ENCODE measurements at regions of chr1 and their contacts with region 1.

Region 1: GRCh38 chr1:175154629-175155472 is 37.7 kb downstream of the KIAA0040 start:
- DNase-seq: peak; percentile 83
- ATAC-seq: peak; percentile 65
- H3K4me3 Mint-ChIP-seq: no peak overlapping the region
- H3K27ac Mint-ChIP-seq: no peak overlapping the region
- H3K4me1 Mint-ChIP-seq: peaks cover 12% of the 10 kb centered on the region
- H3K27me3 Mint-ChIP-seq: peaks cover 25% of the 10 kb centered on the region
- CTCF ChIP-seq: peak; percentile 88

Region 2: GRCh38 chr1:175015243-175015642 is 139.6 kb before region 1 on chr1:
- CTCF ChIA-PET with region 1: no interaction called
- POLR2A ChIA-PET with region 1: no interaction called
- intact Hi-C with region 1: no loop called
- DNase-seq: no peak
- ATAC-seq: no peak
- H3K4me3 Mint-ChIP-seq: no peak overlapping the region
- H3K27ac Mint-ChIP-seq: peak overlapping the region; percentile 51
- H3K4me1 Mint-ChIP-seq: peaks cover 10% of the 10 kb centered on the region
- H3K27me3 Mint-ChIP-seq: no peaks in the 10 kb centered on the region
- CTCF ChIP-seq: no peak

Region 3: GRCh38 chr1:175035865-175036264 is 119.0 kb before region 1 on chr1:
- CTCF ChIA-PET with region 1: interaction called, 11 read pairs
- POLR2A ChIA-PET with region 1: interaction called, 3 read pairs
- intact Hi-C with region 1: no loop called
- DNase-seq: no peak
- ATAC-seq: no peak
- H3K4me3 Mint-ChIP-seq: no peak overlapping the region
- H3K27ac Mint-ChIP-seq: no peak overlapping the region
- H3K4me1 Mint-ChIP-seq: no peaks in the 10 kb centered on the region
- H3K27me3 Mint-ChIP-seq: no peaks in the 10 kb centered on the region
- CTCF ChIP-seq: no peak

Region 4: DNA sequence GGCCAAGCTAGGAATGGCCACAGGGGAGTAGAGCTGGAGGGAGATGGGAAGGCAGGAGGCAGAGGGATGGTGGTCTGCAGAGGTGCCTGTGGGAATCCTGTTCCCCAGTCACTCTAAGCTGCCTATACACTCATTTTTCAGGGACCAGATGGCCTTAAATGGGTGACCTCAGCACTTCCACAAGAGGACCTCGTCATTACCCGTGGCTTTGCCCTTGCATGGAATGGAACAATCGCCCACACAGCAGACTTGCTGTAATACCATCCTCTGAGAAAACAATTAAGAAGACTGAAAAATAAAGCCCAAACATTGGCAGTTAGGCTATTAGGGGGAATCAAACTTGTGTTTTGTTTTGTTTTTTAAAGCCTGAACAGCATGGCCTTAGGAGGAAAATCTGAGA is 100.1 kb before region 1 on chr1:
- CTCF ChIA-PET with region 1: no interaction called
- POLR2A ChIA-PET with region 1: no interaction called
- intact Hi-C with region 1: no loop called
- DNase-seq: no peak
- ATAC-seq: no peak
- H3K4me3 Mint-ChIP-seq: no peak overlapping the region
- H3K27ac Mint-ChIP-seq: no peak overlapping the region
- H3K4me1 Mint-ChIP-seq: no peaks in the 10 kb centered on the region
- H3K27me3 Mint-ChIP-seq: peaks cover 23% of the 10 kb centered on the region
- CTCF ChIP-seq: no peak

Region 5: DNA sequence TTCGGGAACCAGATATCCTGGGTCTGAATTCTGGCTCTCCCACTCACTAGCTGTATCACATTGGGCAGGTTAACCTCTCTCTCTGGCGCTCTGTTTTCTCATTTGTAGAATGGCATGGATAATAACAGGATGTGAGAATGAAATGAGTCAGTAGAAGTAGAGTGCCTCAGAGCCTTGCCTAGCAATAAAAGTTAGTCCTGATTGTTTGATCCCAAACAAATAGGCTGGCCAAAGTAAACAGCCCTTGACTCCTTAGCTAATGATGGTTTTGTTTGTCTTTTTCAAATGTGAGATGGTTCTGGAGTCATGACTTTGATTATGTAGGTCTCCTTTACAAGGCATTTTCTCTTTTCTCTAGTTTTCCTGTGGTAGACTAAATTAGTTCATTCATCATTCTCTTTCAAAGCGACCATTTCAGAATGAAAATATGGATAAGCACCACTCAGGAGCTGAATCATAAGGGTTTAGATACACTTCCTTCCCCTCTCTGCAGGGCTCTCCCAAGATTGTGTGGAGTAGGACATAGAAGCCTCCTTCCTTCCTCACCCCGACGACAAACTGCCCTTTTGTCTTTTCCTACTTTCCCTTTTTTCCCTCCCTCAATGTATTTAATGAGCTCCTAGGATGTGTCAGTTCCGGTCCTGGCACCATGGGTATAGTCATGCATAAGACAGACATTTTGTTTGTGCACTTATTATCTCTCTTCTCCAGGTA is 14.6 kb after region 1 on chr1:
- CTCF ChIA-PET with region 1: interaction called, 34 read pairs
- POLR2A ChIA-PET with region 1: interaction called, 3 read pairs
- intact Hi-C with region 1: no loop called
- DNase-seq: no peak
- ATAC-seq: peak; percentile 55
- H3K4me3 Mint-ChIP-seq: no peak overlapping the region
- H3K27ac Mint-ChIP-seq: peak overlapping the region; percentile 24
- H3K4me1 Mint-ChIP-seq: peaks cover 42% of the 10 kb centered on the region
- H3K27me3 Mint-ChIP-seq: no peaks in the 10 kb centered on the region
- CTCF ChIP-seq: no peak

Region 6: DNA sequence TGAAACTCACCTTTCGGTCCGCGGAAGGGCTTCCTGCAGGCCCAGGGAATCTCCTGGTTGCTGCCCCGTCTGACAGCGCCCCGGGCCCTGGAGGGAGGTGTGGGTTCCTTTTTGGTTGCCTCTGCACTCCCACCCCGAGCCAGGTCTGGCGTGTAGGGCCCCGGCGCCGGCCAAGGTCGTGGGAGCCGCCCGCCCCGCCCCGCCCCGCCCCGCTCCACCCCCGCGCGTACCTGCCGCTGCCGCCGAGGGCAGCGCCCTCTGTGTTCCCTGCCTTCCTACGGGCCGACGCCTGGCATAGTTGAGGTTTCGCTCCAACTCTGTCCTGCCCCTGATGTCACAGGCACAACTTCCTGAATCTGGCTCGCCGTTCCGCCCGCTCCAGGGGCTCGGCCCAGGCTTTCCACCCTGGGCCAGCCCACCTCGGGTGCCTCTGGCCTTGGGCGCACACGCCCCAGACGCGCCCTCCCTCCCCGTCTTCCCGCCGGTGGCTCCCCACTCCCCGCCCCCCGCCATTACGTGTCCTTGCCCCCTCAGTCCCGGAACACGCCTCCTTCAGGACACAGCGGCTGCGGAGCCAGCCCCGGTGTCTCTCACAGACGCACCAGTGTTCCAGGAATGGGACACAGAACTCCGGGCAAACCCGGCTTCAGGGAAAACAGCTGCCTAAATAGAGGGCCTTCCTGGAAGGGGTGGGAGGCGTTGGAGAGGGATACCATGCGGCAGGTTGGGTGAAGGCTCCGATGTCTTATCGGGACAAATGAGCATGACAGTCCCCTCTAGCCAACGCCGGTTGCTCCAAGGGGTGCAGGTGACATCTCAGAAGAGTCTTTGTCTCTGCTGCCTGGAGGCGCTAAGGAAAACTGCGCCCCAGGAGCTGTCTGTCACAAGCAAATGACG is 38.0 kb after region 1 on chr1 and contains the start of gene KIAA0040:
- CTCF ChIA-PET with region 1: interaction called, 40 read pairs
- POLR2A ChIA-PET with region 1: interaction called, 3 read pairs
- intact Hi-C with region 1: no loop called
- DNase-seq: peak; percentile 66
- ATAC-seq: peak; percentile 64
- H3K4me3 Mint-ChIP-seq: peak within 1 kb of the TSS; percentile 96
- H3K27ac Mint-ChIP-seq: peak within 1 kb of the TSS; percentile 92
- H3K4me1 Mint-ChIP-seq: peaks cover 46% of the 10 kb centered on the region
- H3K27me3 Mint-ChIP-seq: no peaks in the 10 kb centered on the region
- CTCF ChIP-seq: no peak
- total RNA-seq, gene KIAA0040: 20.8 to 21.1 TPM

Region 7: GRCh38 chr1:175294179-175294756 is 139.4 kb after region 1 on chr1:
- CTCF ChIA-PET with region 1: interaction called, 12 read pairs
- POLR2A ChIA-PET with region 1: no interaction called
- intact Hi-C with region 1: no loop called
- DNase-seq: no peak
- ATAC-seq: no peak
- H3K4me3 Mint-ChIP-seq: no peak overlapping the region
- H3K27ac Mint-ChIP-seq: no peak overlapping the region
- H3K4me1 Mint-ChIP-seq: peaks cover 23% of the 10 kb centered on the region
- H3K27me3 Mint-ChIP-seq: peaks cover 3% of the 10 kb centered on the region
- CTCF ChIP-seq: no peak

Region 8: GRCh38 chr1:175319418-175320230 is 164.8 kb after region 1 on chr1:
- CTCF ChIA-PET with region 1: interaction called, 408 read pairs
- POLR2A ChIA-PET with region 1: no interaction called
- intact Hi-C with region 1: loop called (anchors 1 kb)
- DNase-seq: peak; percentile 76
- ATAC-seq: peak; percentile 90
- H3K4me3 Mint-ChIP-seq: no peak overlapping the region
- H3K27ac Mint-ChIP-seq: no peak overlapping the region
- H3K4me1 Mint-ChIP-seq: peaks cover 15% of the 10 kb centered on the region
- H3K27me3 Mint-ChIP-seq: no peaks in the 10 kb centered on the region
- CTCF ChIP-seq: peak; percentile 76

Region 9: GRCh38 chr1:175353066-175353465 is 198.2 kb after region 1 on chr1:
- CTCF ChIA-PET with region 1: interaction called, 11 read pairs
- POLR2A ChIA-PET with region 1: no interaction called
- intact Hi-C with region 1: no loop called
- DNase-seq: no peak
- ATAC-seq: no peak
- H3K4me3 Mint-ChIP-seq: no peak overlapping the region
- H3K27ac Mint-ChIP-seq: no peak overlapping the region
- H3K4me1 Mint-ChIP-seq: no peaks in the 10 kb centered on the region
- H3K27me3 Mint-ChIP-seq: peaks cover 2% of the 10 kb centered on the region
- CTCF ChIP-seq: no peak

Measured in activated CD8-positive, alpha-beta T cell treated with anti-CD3 and anti-CD28 coated beads for 36 hours (primary cell).